ENCODE measurements at regions of chr1 and their contacts with region 1.

Region 1: GRCh38 chr1:167059045-167059808 is 30.9 kb downstream of the GPA33 start:
- DNase-seq: peak; percentile 45
- ATAC-seq: peak; percentile 92
- H3K4me3 ChIP-seq: no peak overlapping the region
- H3K27ac ChIP-seq: no peak overlapping the region
- H3K4me1 ChIP-seq: no peaks in the 10 kb centered on the region
- H3K27me3 ChIP-seq: no peaks in the 10 kb centered on the region
- CTCF ChIP-seq: peak; percentile 90
- POLR2A ChIP-seq: no peak
- RAD21 ChIP-seq: peak; percentile 76

Region 2: DNA sequence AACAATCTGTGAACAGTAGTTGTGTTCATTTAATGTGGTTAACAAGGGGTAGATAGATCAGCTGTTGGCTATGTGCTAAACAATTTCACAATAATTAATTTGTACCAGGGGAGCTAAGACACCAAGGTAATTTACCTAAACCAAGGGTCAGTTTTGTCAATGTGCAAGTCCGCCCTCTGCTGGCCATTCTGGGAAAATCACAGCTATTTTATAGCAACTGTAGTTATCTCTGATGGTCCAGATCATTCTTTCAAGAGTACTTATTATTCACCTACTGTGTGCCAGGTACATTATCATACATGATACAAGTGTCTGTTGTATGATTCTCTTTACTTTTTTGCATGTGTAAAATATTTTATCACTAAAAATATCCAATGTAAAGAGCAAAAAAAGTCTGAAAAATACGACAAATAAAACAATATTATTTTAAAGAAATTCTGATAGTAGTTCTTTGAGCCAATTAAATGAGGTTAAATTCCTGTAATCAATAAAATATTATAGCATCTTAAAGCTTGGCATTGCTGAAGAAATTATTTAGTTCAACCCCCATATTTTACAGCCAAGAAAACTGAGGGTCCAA is 580.1 kb before region 1 on chr1:
- CTCF ChIA-PET with region 1: no interaction called
- POLR2A ChIA-PET with region 1: no interaction called
- dilution Hi-C with region 1: no loop called
- in situ Hi-C with region 1: loop called (anchors 10 kb)
- intact Hi-C with region 1: no loop called
- DNase-seq: peak; percentile 18
- ATAC-seq: peak; percentile 44; the same call in 1 of the 2 replicates
- H3K4me3 ChIP-seq: no peak overlapping the region
- H3K27ac ChIP-seq: no peak overlapping the region
- H3K4me1 ChIP-seq: no peaks in the 10 kb centered on the region
- H3K27me3 ChIP-seq: no peaks in the 10 kb centered on the region
- CTCF ChIP-seq: peak; percentile 62
- POLR2A ChIP-seq: no peak
- RAD21 ChIP-seq: peak; percentile 55

Region 3: GRCh38 chr1:166489670-166490436 is 569.4 kb before region 1 on chr1:
- CTCF ChIA-PET with region 1: no interaction called
- POLR2A ChIA-PET with region 1: no interaction called
- dilution Hi-C with region 1: no loop called
- in situ Hi-C with region 1: no loop called
- intact Hi-C with region 1: loop called (anchors 5 kb)
- DNase-seq: no peak
- ATAC-seq: no peak
- H3K4me3 ChIP-seq: no peak overlapping the region
- H3K27ac ChIP-seq: no peak overlapping the region
- H3K4me1 ChIP-seq: no peaks in the 10 kb centered on the region
- H3K27me3 ChIP-seq: no peaks in the 10 kb centered on the region
- CTCF ChIP-seq: no peak
- POLR2A ChIP-seq: no peak
- RAD21 ChIP-seq: no peak

Region 4: DNA sequence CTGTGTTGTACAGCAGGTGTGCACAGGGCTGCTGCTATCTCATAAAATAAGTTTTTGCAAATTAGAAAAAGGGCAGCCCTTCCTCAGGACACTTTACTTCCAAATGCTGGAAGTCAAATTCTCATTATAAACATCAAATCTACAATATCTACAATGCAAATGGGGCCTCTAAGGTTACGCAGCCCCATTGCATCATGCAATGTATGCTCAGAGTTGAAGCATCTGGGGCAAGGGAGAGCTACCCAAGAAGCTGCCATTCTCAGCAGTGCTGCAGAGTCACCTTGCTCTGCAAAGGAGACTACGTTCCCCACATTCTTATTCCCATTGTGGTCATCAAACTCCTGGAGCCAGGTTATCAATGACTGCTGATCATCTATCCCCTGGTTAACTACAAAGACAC is 428.9 kb before region 1 on chr1:
- CTCF ChIA-PET with region 1: no interaction called
- POLR2A ChIA-PET with region 1: no interaction called
- dilution Hi-C with region 1: no loop called
- in situ Hi-C with region 1: no loop called
- intact Hi-C with region 1: no loop called
- DNase-seq: no peak
- ATAC-seq: no peak
- H3K4me3 ChIP-seq: no peak overlapping the region
- H3K27ac ChIP-seq: no peak overlapping the region
- H3K4me1 ChIP-seq: no peaks in the 10 kb centered on the region
- H3K27me3 ChIP-seq: no peaks in the 10 kb centered on the region
- CTCF ChIP-seq: no peak
- POLR2A ChIP-seq: no peak
- RAD21 ChIP-seq: no peak

Region 5: GRCh38 chr1:166716620-166717019 is 342.6 kb before region 1 on chr1:
- CTCF ChIA-PET with region 1: no interaction called
- POLR2A ChIA-PET with region 1: no interaction called
- dilution Hi-C with region 1: no loop called
- in situ Hi-C with region 1: no loop called
- intact Hi-C with region 1: no loop called
- DNase-seq: no peak
- ATAC-seq: no peak
- H3K4me3 ChIP-seq: no peak overlapping the region
- H3K27ac ChIP-seq: no peak overlapping the region
- H3K4me1 ChIP-seq: no peaks in the 10 kb centered on the region
- H3K27me3 ChIP-seq: no peaks in the 10 kb centered on the region
- CTCF ChIP-seq: no peak
- POLR2A ChIP-seq: no peak
- RAD21 ChIP-seq: no peak

Region 6: GRCh38 chr1:166884040-166884642 is 175.1 kb before region 1 on chr1:
- CTCF ChIA-PET with region 1: interaction called, 11 read pairs
- POLR2A ChIA-PET with region 1: no interaction called
- dilution Hi-C with region 1: no loop called
- in situ Hi-C with region 1: no loop called
- intact Hi-C with region 1: loop called (anchors 1 kb)
- DNase-seq: peak; percentile 12
- ATAC-seq: peak; percentile 72
- H3K4me3 ChIP-seq: no peak overlapping the region
- H3K27ac ChIP-seq: no peak overlapping the region
- H3K4me1 ChIP-seq: no peaks in the 10 kb centered on the region
- H3K27me3 ChIP-seq: peaks cover 25% of the 10 kb centered on the region
- CTCF ChIP-seq: peak; percentile 55
- POLR2A ChIP-seq: no peak
- RAD21 ChIP-seq: peak; percentile 63

Region 7: GRCh38 chr1:166910396-166910994 is 148.7 kb before region 1 on chr1:
- CTCF ChIA-PET with region 1: interaction called, 41 read pairs
- POLR2A ChIA-PET with region 1: no interaction called
- dilution Hi-C with region 1: no loop called
- in situ Hi-C with region 1: loop called (anchors 10 kb)
- intact Hi-C with region 1: loop called (anchors 1 kb)
- DNase-seq: peak; percentile 81
- ATAC-seq: peak; percentile 72
- H3K4me3 ChIP-seq: no peak overlapping the region
- H3K27ac ChIP-seq: no peak overlapping the region
- H3K4me1 ChIP-seq: peaks cover 3% of the 10 kb centered on the region; the same call in 1 of the 2 replicates
- H3K27me3 ChIP-seq: peaks cover 2% of the 10 kb centered on the region; the same call in 1 of the 2 replicates
- CTCF ChIP-seq: peak; percentile 68
- POLR2A ChIP-seq: no peak
- RAD21 ChIP-seq: peak; percentile 71

Measured in IMR-90 (cell line).